HepG2 (cell line): ENCODE measurements at regions of chr10 and their contacts with region 1.

Region 1: DNA sequence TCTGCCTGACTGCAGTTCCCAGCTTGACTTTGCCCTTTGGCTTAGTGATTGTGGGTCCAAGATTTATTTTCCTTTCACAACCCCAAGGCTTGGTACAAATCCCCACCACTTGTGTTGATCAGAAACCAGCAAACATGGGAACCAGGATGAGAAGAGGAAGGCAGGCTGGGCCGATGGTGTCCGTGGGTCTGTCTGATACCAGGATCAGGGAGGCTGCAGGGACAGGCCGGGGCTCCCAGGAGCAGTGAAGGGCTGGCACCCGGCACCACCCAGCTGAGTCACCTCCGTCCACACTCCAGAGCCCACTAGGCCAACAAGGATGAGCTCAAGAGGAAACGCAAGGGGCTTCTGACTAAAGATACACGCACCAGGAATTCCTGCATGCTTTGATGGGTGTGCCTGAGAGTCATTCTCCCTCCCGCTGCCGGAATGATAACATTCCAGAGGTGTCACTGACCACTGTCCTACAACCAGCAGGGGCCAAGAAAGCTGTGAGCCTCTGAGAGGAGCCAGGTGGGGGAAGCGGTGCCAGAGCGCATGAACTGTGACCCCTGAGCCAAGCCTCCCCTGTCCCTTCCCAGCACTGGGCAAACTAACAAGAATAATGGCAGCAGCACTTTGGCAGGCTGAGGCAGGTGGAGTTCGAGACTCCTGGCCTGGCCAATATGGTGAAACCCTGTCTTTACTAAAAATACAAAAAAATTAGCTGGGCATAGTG is 29.2 kb upstream of the PROSER2 start:
- DNase-seq: peak; percentile 87
- ATAC-seq: peak; percentile 80
- H3K4me3 ChIP-seq: peak overlapping the region; percentile 44 to 72 (median 50); a peak in 5 of 6 replicates
- H3K27ac ChIP-seq: peak overlapping the region; percentile 63
- H3K4me1 ChIP-seq: peaks cover 53% of the 10 kb centered on the region
- H3K27me3 ChIP-seq: peaks cover 0 to 6% of the 10 kb centered on the region in 2 experiments; a peak in 1 of 5 replicates
- CTCF ChIP-seq: peak; percentile 18; the same call in 1 of the 2 replicates
- EP300 ChIP-seq: 0 out of 4 replicates have a peak, but pooled peaks of 1 of the 2 experiments have one; percentile 35
- POLR2A ChIP-seq: no peak
- RAD21 ChIP-seq: no peak

Region 2: GRCh38 chr10:11810313-11810766 is 16.4 kb after region 1 on chr10:
- CTCF ChIA-PET with region 1: no interaction called
- POLR2A ChIA-PET with region 1: interaction called, 13 read pairs
- in situ Hi-C with region 1: no loop called
- intact Hi-C with region 1: no loop called
- DNase-seq: peak; percentile 70
- ATAC-seq: peak; percentile 71
- H3K4me3 ChIP-seq: peak overlapping the region in 2 of 3 experiments; percentile 4 to 46; a peak in 3 of 6 replicates
- H3K27ac ChIP-seq: no peak overlapping the region
- H3K4me1 ChIP-seq: peaks cover 63% of the 10 kb centered on the region
- H3K27me3 ChIP-seq: peaks cover 0 to 31% of the 10 kb centered on the region in 2 experiments; a peak in 3 of 5 replicates
- CTCF ChIP-seq: no peak
- EP300 ChIP-seq: no peak
- POLR2A ChIP-seq: no peak
- RAD21 ChIP-seq: no peak

Region 3: GRCh38 chr10:11823122-11823988 is 29.4 kb after region 1 on chr10 and contains the start of gene PROSER2:
- CTCF ChIA-PET with region 1: interaction called, 17 read pairs
- POLR2A ChIA-PET with region 1: interaction called, 10 read pairs
- in situ Hi-C with region 1: no loop called
- intact Hi-C with region 1: loop called (anchors 2 kb)
- DNase-seq: no peak
- ATAC-seq: peak; percentile 89
- H3K4me3 ChIP-seq: peak within 1 kb of the TSS; percentile 90 to 98 (median 97)
- H3K27ac ChIP-seq: peak within 1 kb of the TSS; percentile 53
- H3K4me1 ChIP-seq: peaks cover 55% of the 10 kb centered on the region
- H3K27me3 ChIP-seq: no peaks in the 10 kb centered on the region
- CTCF ChIP-seq: no peak; the same call in 1 of the 2 replicates
- EP300 ChIP-seq: no peak
- POLR2A ChIP-seq: peak; percentile 38 to 83; a peak in 3 of 4 replicates
- RAD21 ChIP-seq: no peak; the same call in none of the 2 replicates
- total RNA-seq, gene PROSER2: 6.7 and 6.9 TPM in 2 replicates

Region 4: GRCh38 chr10:11830836-11831519 is 37.1 kb after region 1 on chr10:
- CTCF ChIA-PET with region 1: no interaction called
- POLR2A ChIA-PET with region 1: interaction called, 14 read pairs
- in situ Hi-C with region 1: no loop called
- intact Hi-C with region 1: no loop called
- DNase-seq: no peak
- ATAC-seq: peak; percentile 56
- H3K4me3 ChIP-seq: peak overlapping the region; percentile 27 to 40 (median 34); a peak in 4 of 6 replicates
- H3K27ac ChIP-seq: peak overlapping the region; percentile 77
- H3K4me1 ChIP-seq: peaks cover 79% of the 10 kb centered on the region
- H3K27me3 ChIP-seq: no peaks in the 10 kb centered on the region
- CTCF ChIP-seq: no peak
- EP300 ChIP-seq: no peak
- POLR2A ChIP-seq: no peak
- RAD21 ChIP-seq: no peak

Region 5: GRCh38 chr10:11874542-11875177 is 80.7 kb after region 1 on chr10:
- CTCF ChIA-PET with region 1: no interaction called
- POLR2A ChIA-PET with region 1: interaction called, 25 read pairs
- in situ Hi-C with region 1: no loop called
- intact Hi-C with region 1: no loop called
- DNase-seq: peak; percentile 80
- ATAC-seq: peak; percentile 48
- H3K4me3 ChIP-seq: peak overlapping the region; percentile 49 to 69 (median 49); a peak in 5 of 6 replicates
- H3K27ac ChIP-seq: peak overlapping the region; percentile 94
- H3K4me1 ChIP-seq: peaks cover 66% of the 10 kb centered on the region
- H3K27me3 ChIP-seq: no peaks in the 10 kb centered on the region
- CTCF ChIP-seq: no peak
- EP300 ChIP-seq: no peak
- POLR2A ChIP-seq: 0 out of 4 replicates have a peak, but pooled peaks of 1 of the 2 experiments have one; percentile 2
- RAD21 ChIP-seq: no peak

Region 6: DNA sequence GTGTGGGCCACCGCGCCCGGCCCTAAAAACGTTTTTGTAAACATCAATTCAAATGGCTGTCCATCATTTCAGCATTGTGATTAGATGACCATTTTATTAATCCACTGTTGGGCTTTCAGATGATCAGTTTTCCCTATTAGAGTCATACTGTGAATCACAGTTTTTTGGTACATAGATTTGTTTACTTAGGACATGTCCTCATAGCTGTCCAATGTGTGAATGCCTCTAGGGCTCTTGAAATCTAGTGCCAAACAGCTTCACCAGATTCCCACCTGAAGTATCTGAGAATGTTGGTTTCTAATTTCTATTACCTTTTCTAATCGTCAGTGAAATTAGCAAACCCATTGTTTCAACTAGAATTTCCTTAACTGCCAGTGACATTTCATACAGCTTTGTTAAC is 181.9 kb after region 1 on chr10:
- CTCF ChIA-PET with region 1: no interaction called
- POLR2A ChIA-PET with region 1: no interaction called
- in situ Hi-C with region 1: no loop called
- intact Hi-C with region 1: no loop called
- DNase-seq: no peak
- ATAC-seq: no peak
- H3K4me3 ChIP-seq: no peak overlapping the region
- H3K27ac ChIP-seq: no peak overlapping the region
- H3K4me1 ChIP-seq: no peaks in the 10 kb centered on the region
- H3K27me3 ChIP-seq: no peaks in the 10 kb centered on the region
- CTCF ChIP-seq: no peak
- EP300 ChIP-seq: no peak
- POLR2A ChIP-seq: no peak
- RAD21 ChIP-seq: no peak

Region 7: GRCh38 chr10:11986593-11987216 is 192.8 kb after region 1 on chr10:
- CTCF ChIA-PET with region 1: interaction called, 5 read pairs
- POLR2A ChIA-PET with region 1: interaction called, 6 read pairs
- in situ Hi-C with region 1: loop called (anchors 5 kb)
- intact Hi-C with region 1: no loop called
- DNase-seq: peak; percentile 83
- ATAC-seq: peak; percentile 87
- H3K4me3 ChIP-seq: peak overlapping the region in 1 of 3 experiments; percentile 29; a peak in 2 of 6 replicates
- H3K27ac ChIP-seq: peak overlapping the region; percentile 60
- H3K4me1 ChIP-seq: peaks cover 15% of the 10 kb centered on the region
- H3K27me3 ChIP-seq: no peaks in the 10 kb centered on the region
- CTCF ChIP-seq: peak; percentile 89
- EP300 ChIP-seq: peak in 1 of 2 experiments; percentile 31; a peak in 2 of 4 replicates
- POLR2A ChIP-seq: no peak
- RAD21 ChIP-seq: peak; percentile 88

Region 8: DNA sequence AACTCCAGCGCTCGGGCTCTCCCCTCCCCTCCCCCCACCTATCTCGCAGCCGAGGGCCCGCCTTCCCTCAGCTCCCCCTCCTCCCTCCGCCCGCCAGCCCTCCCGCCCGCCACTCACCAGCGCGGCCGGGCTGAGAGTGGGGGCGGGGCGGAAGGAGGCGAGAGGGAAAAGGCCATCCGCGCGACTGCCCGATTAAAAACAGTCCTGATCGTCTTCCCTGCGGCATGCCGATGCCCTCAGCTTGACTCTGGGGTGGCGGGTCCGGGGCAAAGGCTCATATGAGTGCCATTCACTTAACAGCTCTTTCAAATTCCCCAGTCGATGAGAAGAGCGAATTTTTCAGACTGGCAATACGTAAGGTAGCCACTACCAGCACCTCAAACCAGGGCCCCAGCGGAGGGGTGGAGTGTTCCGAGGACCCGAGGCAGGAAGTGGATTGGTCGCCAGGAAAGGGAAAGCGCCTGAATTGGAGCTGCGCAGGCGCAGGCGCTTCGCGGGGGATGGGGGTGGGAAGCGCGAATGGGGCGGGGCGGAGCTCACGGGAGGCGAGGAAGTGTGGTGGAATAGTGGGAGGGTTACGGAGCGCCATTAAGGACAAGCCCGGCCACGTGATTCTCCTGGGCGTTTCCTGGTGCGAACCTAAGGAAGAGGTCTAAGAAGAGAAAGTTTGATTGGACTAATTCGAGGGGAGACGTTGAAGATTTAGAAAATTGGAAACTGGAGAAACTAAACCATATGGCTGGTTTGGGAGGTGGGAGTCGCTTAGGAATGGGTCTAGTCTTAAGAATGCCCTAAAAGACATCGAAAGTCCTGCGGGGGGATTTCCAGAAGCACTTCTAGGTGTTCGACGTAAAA is 249.1 kb after region 1 on chr10 and contains the start of gene UPF2:
- CTCF ChIA-PET with region 1: no interaction called
- POLR2A ChIA-PET with region 1: interaction called, 11 read pairs
- in situ Hi-C with region 1: no loop called
- intact Hi-C with region 1: no loop called
- DNase-seq: peak; percentile 96
- ATAC-seq: peak; percentile 90
- H3K4me3 ChIP-seq: peak within 1 kb of the TSS; percentile 77 to 96 (median 95)
- H3K27ac ChIP-seq: peak within 1 kb of the TSS; percentile 99
- H3K4me1 ChIP-seq: peaks cover 35% of the 10 kb centered on the region
- H3K27me3 ChIP-seq: no peaks in the 10 kb centered on the region; a peak in 1 of 5 replicates
- CTCF ChIP-seq: no peak
- EP300 ChIP-seq: 0 out of 4 replicates have a peak, but pooled peaks of 1 of the 2 experiments have one; percentile 2
- POLR2A ChIP-seq: peak; percentile 48 to 59; a peak in 3 of 4 replicates
- RAD21 ChIP-seq: no peak
- total RNA-seq, gene UPF2: 14.5 and 21.8 TPM in 2 replicates